Naive thymus-derived CD4-positive, alpha-beta T cell (primary cell): ENCODE measurements at regions of chr2 and their contacts with region 1.

Region 1: GRCh38 chr2:19362755-19363473 is 4.5 kb upstream of the OSR1 start:
- DNase-seq: peak in 3 of 9 donors; percentile 41 to 46 (median 44)
- ATAC-seq: peak; percentile 38
- H3K4me3 ChIP-seq: peak overlapping the region; percentile 79
- H3K4me3 Mint-ChIP-seq: peak overlapping the region; percentile 88 to 99 (median 94)
- H3K27ac ChIP-seq: no peak overlapping the region
- H3K27ac Mint-ChIP-seq: peak overlapping the region in 8 of 9 donors; percentile 40 to 90 (median 80)
- H3K4me1 ChIP-seq: peaks cover 7 to 20% of the 10 kb centered on the region in 2 donors
- H3K4me1 Mint-ChIP-seq: peaks cover 19 to 40% (median 35%) of the 10 kb centered on the region in 7 donors
- H3K27me3 ChIP-seq: peaks cover 19 to 30% of the 10 kb centered on the region in 2 donors
- H3K27me3 Mint-ChIP-seq: peaks cover 39 to 97% (median 43%) of the 10 kb centered on the region in 5 donors

Region 2: GRCh38 chr2:18749912-18750526 is 612.9 kb before region 1 on chr2:
- CTCF ChIA-PET with region 1: interaction called, 3 read pairs
- POLR2A ChIA-PET with region 1: no interaction called
- intact Hi-C with region 1: loop called in 1 of 2 experiments (anchors 2 kb)
- DNase-seq: peak in 6 of 9 donors; percentile 19 to 36 (median 22)
- ATAC-seq: no peak
- H3K4me3 ChIP-seq: no peak overlapping the region
- H3K4me3 Mint-ChIP-seq: no peak overlapping the region
- H3K27ac ChIP-seq: no peak overlapping the region
- H3K27ac Mint-ChIP-seq: no peak overlapping the region
- H3K4me1 ChIP-seq: no peaks in the 10 kb centered on the region
- H3K4me1 Mint-ChIP-seq: no peaks in the 10 kb centered on the region
- H3K27me3 ChIP-seq: no peaks in the 10 kb centered on the region
- H3K27me3 Mint-ChIP-seq: no peaks in the 10 kb centered on the region

Region 3: DNA sequence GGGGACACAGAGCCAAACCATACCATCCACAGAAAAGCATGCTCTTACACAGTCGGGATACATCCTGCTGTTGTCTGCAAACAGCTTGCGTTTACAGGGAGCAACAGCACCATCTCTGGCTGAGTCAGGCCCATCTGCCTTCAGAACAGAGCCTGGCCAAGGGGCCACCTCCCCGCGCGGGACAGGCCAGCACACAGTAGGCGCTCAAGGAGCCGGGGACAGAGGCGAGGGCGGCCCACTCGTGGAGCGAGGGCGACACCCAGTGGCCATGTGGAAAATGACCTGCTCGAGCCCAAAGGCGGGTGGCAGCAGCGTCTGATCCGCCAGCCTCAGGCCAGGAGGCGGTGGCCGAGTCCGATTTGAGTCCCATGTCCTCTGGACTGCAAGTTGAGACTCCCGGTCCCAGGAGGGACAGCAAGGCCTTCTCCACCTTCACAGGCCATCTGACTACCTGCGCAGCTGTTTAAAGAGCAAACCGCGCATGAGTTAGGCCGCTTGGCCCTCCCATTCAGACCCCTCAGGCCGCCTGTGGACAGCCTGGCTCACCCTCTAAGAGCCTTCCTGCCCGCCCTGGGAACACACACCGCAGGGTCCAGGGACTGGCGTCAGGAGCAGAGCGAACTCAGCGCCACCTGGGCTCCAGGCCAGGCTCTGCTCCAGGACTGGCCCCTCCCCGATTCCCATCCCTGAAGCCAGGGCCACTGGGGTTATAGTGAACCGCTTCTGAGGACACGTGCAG is 500.6 kb after region 1 on chr2:
- CTCF ChIA-PET with region 1: no interaction called
- POLR2A ChIA-PET with region 1: no interaction called
- intact Hi-C with region 1: loop called in 1 of 2 experiments (anchors 5 kb)
- DNase-seq: peak; percentile 28 to 77 (median 66)
- ATAC-seq: peak; percentile 84
- H3K4me3 ChIP-seq: no peak overlapping the region
- H3K4me3 Mint-ChIP-seq: peak overlapping the region in 1 of 10 donors; percentile 34
- H3K27ac ChIP-seq: no peak overlapping the region
- H3K27ac Mint-ChIP-seq: no peak overlapping the region
- H3K4me1 ChIP-seq: peaks cover 10% of the 10 kb centered on the region in 2 donors
- H3K4me1 Mint-ChIP-seq: peaks cover 10 to 17% (median 16%) of the 10 kb centered on the region in 7 donors
- H3K27me3 ChIP-seq: no peaks in the 10 kb centered on the region
- H3K27me3 Mint-ChIP-seq: peaks cover 0 to 13% (median 2%) of the 10 kb centered on the region in 5 donors

Region 4: GRCh38 chr2:19989681-19990415 is 626.9 kb after region 1 on chr2 and contains the start of gene WDR35:
- CTCF ChIA-PET with region 1: no interaction called
- POLR2A ChIA-PET with region 1: no interaction called
- intact Hi-C with region 1: loop called in 1 of 2 experiments (anchors 5 kb)
- DNase-seq: peak; percentile 78 to 99 (median 86)
- ATAC-seq: peak; percentile 95
- H3K4me3 ChIP-seq: peak within 1 kb of the TSS; percentile 91
- H3K4me3 Mint-ChIP-seq: peak within 1 kb of the TSS; percentile 88 to 94 (median 89)
- H3K27ac ChIP-seq: peak within 1 kb of the TSS; percentile 68
- H3K27ac Mint-ChIP-seq: peak within 1 kb of the TSS; percentile 86 to 94 (median 89)
- H3K4me1 ChIP-seq: peaks cover 0 to 14% of the 10 kb centered on the region in 2 donors
- H3K4me1 Mint-ChIP-seq: peaks cover 11 to 33% (median 23%) of the 10 kb centered on the region in 7 donors
- H3K27me3 ChIP-seq: peaks cover 0 to 4% of the 10 kb centered on the region in 2 donors
- H3K27me3 Mint-ChIP-seq: peaks cover 7 to 30% (median 12%) of the 10 kb centered on the region in 5 donors
- total RNA-seq, gene WDR35: 3.2 to 6.0 (median 3.7) TPM